CD8-positive, alpha-beta T cell (primary cell): ENCODE measurements at regions of chr13 and their contacts with region 1.

Region 1: DNA sequence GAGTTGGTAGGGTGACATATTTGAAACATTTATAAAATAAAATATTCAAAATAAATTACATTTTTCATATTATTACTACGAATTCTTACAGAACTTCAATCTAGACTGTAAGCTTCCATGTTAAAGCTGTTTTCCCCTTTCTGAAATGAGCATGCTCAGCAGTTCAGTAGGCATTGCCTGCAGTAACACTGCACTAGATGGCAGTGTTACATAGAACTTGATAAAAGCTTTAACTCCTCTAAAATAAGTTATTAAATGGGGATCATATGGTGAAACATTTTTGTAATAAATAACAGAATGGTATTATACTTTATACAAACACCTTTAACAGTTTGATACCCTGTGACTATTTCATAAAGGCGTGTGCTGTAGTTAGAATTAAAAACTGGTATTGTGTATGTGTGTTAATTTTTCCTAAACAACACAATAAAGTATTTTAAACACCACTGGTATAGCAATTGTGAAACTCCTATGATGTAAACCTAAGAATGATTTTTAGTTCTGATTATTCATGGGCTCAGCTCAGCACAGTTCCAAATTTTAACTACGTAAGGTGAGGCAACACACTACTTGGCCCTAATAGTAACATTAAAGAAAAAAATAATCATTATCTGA is 11.6 kb upstream of the GPR18 start:
- DNase-seq: peak in 4 of 9 experiments; percentile 26 to 84 (median 58)
- ATAC-seq: peak; percentile 68
- H3K4me3 ChIP-seq: no peak overlapping the region
- H3K4me3 Mint-ChIP-seq: no peak overlapping the region
- H3K27ac ChIP-seq: no peak overlapping the region
- H3K27ac Mint-ChIP-seq: peak overlapping the region; percentile 92
- H3K4me1 ChIP-seq: peaks cover 54% of the 10 kb centered on the region
- H3K4me1 Mint-ChIP-seq: peaks cover 63% of the 10 kb centered on the region
- H3K27me3 ChIP-seq: no peaks in the 10 kb centered on the region
- H3K27me3 Mint-ChIP-seq: no peaks in the 10 kb centered on the region
- CTCF ChIP-seq: peak; percentile 91

Region 2: DNA sequence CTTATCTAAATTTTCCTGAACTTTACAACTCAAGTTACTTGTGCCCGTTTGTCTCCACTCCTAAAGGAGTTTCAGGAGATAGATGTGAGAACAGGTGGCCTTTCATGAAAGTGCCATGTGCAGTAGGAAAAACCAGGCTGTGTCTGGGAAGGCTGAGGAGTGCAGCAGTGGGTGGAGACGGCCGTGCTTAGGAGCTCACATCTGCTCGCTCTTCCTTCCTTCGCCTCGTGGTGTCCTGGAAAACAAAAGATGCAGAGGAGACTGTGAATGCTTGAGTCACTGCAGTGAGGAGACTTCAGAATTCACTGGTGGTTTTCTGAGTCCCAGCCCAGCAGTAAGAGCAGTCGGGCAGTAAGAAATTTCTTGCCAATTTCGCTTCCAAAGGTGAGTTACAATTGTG is 954.3 kb before region 1 on chr13:
- CTCF ChIA-PET with region 1: no interaction called
- POLR2A ChIA-PET with region 1: no interaction called
- intact Hi-C with region 1: no loop called
- DNase-seq: no peak
- ATAC-seq: no peak
- H3K4me3 ChIP-seq: no peak overlapping the region
- H3K4me3 Mint-ChIP-seq: no peak overlapping the region
- H3K27ac ChIP-seq: no peak overlapping the region
- H3K27ac Mint-ChIP-seq: no peak overlapping the region
- H3K4me1 ChIP-seq: no peaks in the 10 kb centered on the region
- H3K4me1 Mint-ChIP-seq: no peaks in the 10 kb centered on the region
- H3K27me3 ChIP-seq: no peaks in the 10 kb centered on the region
- H3K27me3 Mint-ChIP-seq: peaks cover 13% of the 10 kb centered on the region
- CTCF ChIP-seq: no peak

Region 3: GRCh38 chr13:98834254-98834960 is 435.3 kb before region 1 on chr13:
- CTCF ChIA-PET with region 1: no interaction called
- POLR2A ChIA-PET with region 1: no interaction called
- intact Hi-C with region 1: no loop called
- DNase-seq: no peak
- ATAC-seq: no peak
- H3K4me3 ChIP-seq: no peak overlapping the region
- H3K4me3 Mint-ChIP-seq: no peak overlapping the region
- H3K27ac ChIP-seq: no peak overlapping the region
- H3K27ac Mint-ChIP-seq: no peak overlapping the region
- H3K4me1 ChIP-seq: no peaks in the 10 kb centered on the region
- H3K4me1 Mint-ChIP-seq: no peaks in the 10 kb centered on the region
- H3K27me3 ChIP-seq: no peaks in the 10 kb centered on the region
- H3K27me3 Mint-ChIP-seq: no peaks in the 10 kb centered on the region
- CTCF ChIP-seq: no peak

Region 4: GRCh38 chr13:99041788-99042187 is 227.9 kb before region 1 on chr13:
- CTCF ChIA-PET with region 1: no interaction called
- POLR2A ChIA-PET with region 1: no interaction called
- intact Hi-C with region 1: no loop called
- DNase-seq: peak in 1 of 9 experiments; percentile 34
- ATAC-seq: no peak
- H3K4me3 ChIP-seq: no peak overlapping the region
- H3K4me3 Mint-ChIP-seq: no peak overlapping the region
- H3K27ac ChIP-seq: no peak overlapping the region
- H3K27ac Mint-ChIP-seq: peak overlapping the region; percentile 82
- H3K4me1 ChIP-seq: peaks cover 54% of the 10 kb centered on the region
- H3K4me1 Mint-ChIP-seq: peaks cover 72% of the 10 kb centered on the region
- H3K27me3 ChIP-seq: no peaks in the 10 kb centered on the region
- H3K27me3 Mint-ChIP-seq: no peaks in the 10 kb centered on the region
- CTCF ChIP-seq: no peak

Region 5: GRCh38 chr13:99087096-99087953 is 182.4 kb before region 1 on chr13:
- CTCF ChIA-PET with region 1: interaction called, 4 read pairs
- POLR2A ChIA-PET with region 1: no interaction called
- intact Hi-C with region 1: loop called in 1 of 2 experiments (anchors 5 kb)
- DNase-seq: peak; percentile 84 to 96 (median 93)
- ATAC-seq: peak; percentile 74
- H3K4me3 ChIP-seq: peak overlapping the region; percentile 66 to 78
- H3K4me3 Mint-ChIP-seq: peak overlapping the region; percentile 94
- H3K27ac ChIP-seq: peak overlapping the region; percentile 85 to 93
- H3K27ac Mint-ChIP-seq: peak overlapping the region; percentile 99
- H3K4me1 ChIP-seq: peaks cover 43% of the 10 kb centered on the region
- H3K4me1 Mint-ChIP-seq: peaks cover 43% of the 10 kb centered on the region
- H3K27me3 ChIP-seq: no peaks in the 10 kb centered on the region
- H3K27me3 Mint-ChIP-seq: no peaks in the 10 kb centered on the region
- CTCF ChIP-seq: peak; percentile 46

Region 6: DNA sequence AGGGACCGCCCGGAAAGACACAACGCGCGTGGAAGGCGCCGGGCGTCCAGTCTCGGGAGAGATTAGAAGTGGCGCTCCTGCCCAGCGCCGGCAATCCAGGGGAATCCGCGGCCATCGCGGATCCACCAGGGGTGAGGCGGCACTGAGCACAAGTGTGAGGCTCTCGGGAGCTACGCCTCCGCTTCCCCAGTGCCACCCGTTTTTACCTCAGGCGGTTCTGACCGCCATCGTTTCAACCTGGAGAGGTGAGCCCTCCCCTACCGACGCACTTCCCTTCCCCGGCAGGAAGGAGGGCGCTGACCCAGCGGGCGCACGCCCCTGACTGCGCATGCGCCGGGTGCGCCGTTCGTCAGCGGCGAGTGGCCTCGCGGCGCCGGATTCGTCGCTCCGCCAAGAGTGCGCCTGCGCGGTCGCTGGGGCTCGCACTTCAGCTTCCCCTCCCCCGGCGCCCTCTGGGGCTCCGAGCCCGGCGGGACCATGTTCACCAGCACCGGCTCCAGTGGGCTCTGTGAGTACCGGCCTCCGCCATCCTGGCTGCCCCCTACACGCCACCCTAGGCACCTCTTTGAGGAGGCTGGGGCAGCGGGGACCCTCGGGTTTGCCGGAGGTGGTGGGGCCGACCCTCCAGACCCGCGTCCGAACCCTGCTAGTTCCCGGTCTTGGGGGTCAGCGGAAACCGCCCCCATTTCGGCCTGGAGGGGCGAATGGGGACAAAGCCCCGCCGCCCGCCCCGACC is 69.1 kb before region 1 on chr13 and contains the start of gene UBAC2:
- CTCF ChIA-PET with region 1: interaction called, 254 read pairs
- POLR2A ChIA-PET with region 1: interaction called, 27 read pairs
- intact Hi-C with region 1: loop called (anchors 1 kb)
- DNase-seq: peak; percentile 93 to 99 (median 97)
- ATAC-seq: peak; percentile 77
- H3K4me3 ChIP-seq: peak within 1 kb of the TSS; percentile 77 to 90
- H3K4me3 Mint-ChIP-seq: peak within 1 kb of the TSS; percentile 90
- H3K27ac ChIP-seq: peak within 1 kb of the TSS; percentile 98 to 99
- H3K27ac Mint-ChIP-seq: peak within 1 kb of the TSS; percentile 94
- H3K4me1 ChIP-seq: peaks cover 53% of the 10 kb centered on the region
- H3K4me1 Mint-ChIP-seq: peaks cover 69% of the 10 kb centered on the region
- H3K27me3 ChIP-seq: no peaks in the 10 kb centered on the region
- H3K27me3 Mint-ChIP-seq: no peaks in the 10 kb centered on the region
- CTCF ChIP-seq: no peak
- total RNA-seq, gene UBAC2: 62.0 to 63.0 TPM

Region 7: DNA sequence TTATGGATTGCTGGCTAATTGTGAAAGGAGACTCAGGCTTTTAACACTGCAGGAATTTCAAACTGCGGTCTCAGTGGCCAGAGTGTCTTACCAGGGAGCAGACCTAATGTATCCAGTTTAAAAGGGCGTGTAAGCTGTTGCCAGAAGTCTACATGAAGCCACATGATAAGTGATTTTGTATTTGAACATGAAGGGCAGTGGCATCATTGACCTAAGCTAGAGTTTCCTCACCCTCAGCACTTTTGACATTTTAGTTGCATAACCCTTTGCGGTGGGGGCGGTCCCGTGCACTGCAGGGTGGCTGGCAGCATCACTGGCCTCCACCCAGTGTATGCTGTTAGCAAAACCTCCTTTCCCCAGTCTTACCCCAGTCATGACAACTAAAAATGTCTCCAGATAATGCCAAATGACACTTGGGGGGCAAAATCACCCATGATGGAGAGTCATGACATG is 12.1 kb after region 1 on chr13:
- CTCF ChIA-PET with region 1: interaction called, 29 read pairs
- POLR2A ChIA-PET with region 1: interaction called, 3 read pairs
- intact Hi-C with region 1: loop called in 1 of 2 experiments (anchors 1 kb)
- DNase-seq: peak in 6 of 9 experiments; percentile 59 to 81 (median 71)
- ATAC-seq: peak; percentile 65
- H3K4me3 ChIP-seq: no peak overlapping the region
- H3K4me3 Mint-ChIP-seq: peak overlapping the region; percentile 38
- H3K27ac ChIP-seq: peak overlapping the region; percentile 53 to 73
- H3K27ac Mint-ChIP-seq: peak overlapping the region; percentile 95
- H3K4me1 ChIP-seq: peaks cover 92% of the 10 kb centered on the region
- H3K4me1 Mint-ChIP-seq: peaks cover 90% of the 10 kb centered on the region
- H3K27me3 ChIP-seq: no peaks in the 10 kb centered on the region
- H3K27me3 Mint-ChIP-seq: no peaks in the 10 kb centered on the region
- CTCF ChIP-seq: no peak

Region 8: DNA sequence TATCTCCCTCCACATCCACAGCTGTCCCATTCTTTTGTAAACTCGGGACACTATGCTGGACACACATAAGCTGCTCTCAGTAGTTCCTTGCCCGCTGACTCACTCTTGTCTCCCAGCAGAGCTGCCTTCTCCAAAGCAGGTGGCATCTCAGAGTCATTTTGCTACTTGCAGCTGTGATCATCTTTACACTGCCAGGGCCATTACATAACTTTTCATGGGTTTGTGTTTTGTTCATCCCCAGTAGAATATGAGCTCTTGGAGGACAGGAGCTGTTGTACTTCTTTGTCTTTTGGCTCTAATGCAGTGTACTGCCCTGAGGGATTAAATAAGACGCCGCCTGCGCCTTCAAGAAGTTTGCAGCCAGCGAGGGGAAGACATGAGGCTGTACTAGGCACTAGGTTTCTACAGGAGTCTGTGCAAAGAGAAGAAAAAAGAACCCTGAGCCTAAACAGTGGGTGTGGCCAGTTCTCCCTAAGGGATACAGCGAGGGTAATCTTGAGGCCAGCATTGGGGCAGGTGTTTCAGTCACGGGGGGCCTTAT is 78.2 kb after region 1 on chr13:
- CTCF ChIA-PET with region 1: interaction called, 27 read pairs
- POLR2A ChIA-PET with region 1: interaction called, 6 read pairs
- intact Hi-C with region 1: no loop called
- DNase-seq: no peak
- ATAC-seq: no peak
- H3K4me3 ChIP-seq: no peak overlapping the region
- H3K4me3 Mint-ChIP-seq: no peak overlapping the region
- H3K27ac ChIP-seq: peak overlapping the region in 1 of 2 experiments; percentile 6
- H3K27ac Mint-ChIP-seq: peak overlapping the region; percentile 82
- H3K4me1 ChIP-seq: peaks cover 34% of the 10 kb centered on the region
- H3K4me1 Mint-ChIP-seq: peaks cover 83% of the 10 kb centered on the region
- H3K27me3 ChIP-seq: no peaks in the 10 kb centered on the region
- H3K27me3 Mint-ChIP-seq: no peaks in the 10 kb centered on the region
- CTCF ChIP-seq: no peak

Region 9: GRCh38 chr13:99380921-99381645 is 111.3 kb after region 1 on chr13:
- CTCF ChIA-PET with region 1: interaction called, 170 read pairs
- POLR2A ChIA-PET with region 1: interaction called, 7 read pairs
- intact Hi-C with region 1: no loop called
- DNase-seq: peak in 7 of 9 experiments; percentile 41 to 84 (median 75)
- ATAC-seq: peak; percentile 50
- H3K4me3 ChIP-seq: no peak overlapping the region
- H3K4me3 Mint-ChIP-seq: peak overlapping the region; percentile 53
- H3K27ac ChIP-seq: peak overlapping the region; percentile 42 to 72
- H3K27ac Mint-ChIP-seq: peak overlapping the region; percentile 98
- H3K4me1 ChIP-seq: peaks cover 79% of the 10 kb centered on the region
- H3K4me1 Mint-ChIP-seq: peaks cover 93% of the 10 kb centered on the region
- H3K27me3 ChIP-seq: no peaks in the 10 kb centered on the region
- H3K27me3 Mint-ChIP-seq: no peaks in the 10 kb centered on the region
- CTCF ChIP-seq: no peak

Region 10: DNA sequence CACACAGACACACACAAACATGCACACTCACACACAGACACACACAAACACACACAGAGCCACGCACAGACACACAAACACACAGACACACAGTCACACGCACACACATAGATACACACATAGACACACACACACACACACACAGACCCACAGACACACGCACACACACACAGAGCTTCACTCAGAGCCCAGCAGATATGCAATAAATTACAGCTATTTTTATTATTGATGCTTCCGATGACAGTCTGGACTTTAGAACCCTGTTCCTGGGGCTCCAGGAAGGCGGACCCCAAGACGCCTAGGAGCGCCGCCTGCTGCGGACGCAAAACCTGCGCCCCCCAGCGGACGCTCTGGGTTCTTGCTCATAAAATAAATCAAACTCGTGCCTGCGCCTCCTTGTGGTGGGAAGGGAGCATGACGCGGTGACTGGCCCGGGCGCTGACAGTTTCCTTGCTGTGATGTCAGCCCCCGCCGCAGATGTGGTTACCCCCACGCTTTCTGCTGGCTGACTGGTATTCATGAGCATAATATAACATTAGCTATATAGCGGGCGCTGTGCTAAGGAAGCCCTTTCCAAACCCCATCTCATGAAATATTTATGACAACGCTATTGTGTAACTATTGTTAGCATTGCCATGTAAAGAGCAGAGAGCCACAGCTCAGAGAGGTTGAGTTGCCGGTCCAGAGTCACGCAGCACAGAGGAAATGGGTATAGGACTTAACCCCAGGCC is 167.1 kb after region 1 on chr13:
- CTCF ChIA-PET with region 1: interaction called, 402 read pairs
- POLR2A ChIA-PET with region 1: interaction called, 8 read pairs
- intact Hi-C with region 1: loop called (anchors 1 kb)
- DNase-seq: peak; percentile 92 to 98 (median 95)
- ATAC-seq: peak; percentile 50
- H3K4me3 ChIP-seq: no peak overlapping the region
- H3K4me3 Mint-ChIP-seq: peak overlapping the region; percentile 63
- H3K27ac ChIP-seq: peak overlapping the region; percentile 27 to 33
- H3K27ac Mint-ChIP-seq: peak overlapping the region; percentile 55
- H3K4me1 ChIP-seq: peaks cover 57% of the 10 kb centered on the region
- H3K4me1 Mint-ChIP-seq: peaks cover 52% of the 10 kb centered on the region
- H3K27me3 ChIP-seq: no peaks in the 10 kb centered on the region
- H3K27me3 Mint-ChIP-seq: no peaks in the 10 kb centered on the region
- CTCF ChIP-seq: peak; percentile 99